Mammary epithelial cell (primary cell): ENCODE measurements at regions of chr3 and their contacts with region 1.

Region 1: DNA sequence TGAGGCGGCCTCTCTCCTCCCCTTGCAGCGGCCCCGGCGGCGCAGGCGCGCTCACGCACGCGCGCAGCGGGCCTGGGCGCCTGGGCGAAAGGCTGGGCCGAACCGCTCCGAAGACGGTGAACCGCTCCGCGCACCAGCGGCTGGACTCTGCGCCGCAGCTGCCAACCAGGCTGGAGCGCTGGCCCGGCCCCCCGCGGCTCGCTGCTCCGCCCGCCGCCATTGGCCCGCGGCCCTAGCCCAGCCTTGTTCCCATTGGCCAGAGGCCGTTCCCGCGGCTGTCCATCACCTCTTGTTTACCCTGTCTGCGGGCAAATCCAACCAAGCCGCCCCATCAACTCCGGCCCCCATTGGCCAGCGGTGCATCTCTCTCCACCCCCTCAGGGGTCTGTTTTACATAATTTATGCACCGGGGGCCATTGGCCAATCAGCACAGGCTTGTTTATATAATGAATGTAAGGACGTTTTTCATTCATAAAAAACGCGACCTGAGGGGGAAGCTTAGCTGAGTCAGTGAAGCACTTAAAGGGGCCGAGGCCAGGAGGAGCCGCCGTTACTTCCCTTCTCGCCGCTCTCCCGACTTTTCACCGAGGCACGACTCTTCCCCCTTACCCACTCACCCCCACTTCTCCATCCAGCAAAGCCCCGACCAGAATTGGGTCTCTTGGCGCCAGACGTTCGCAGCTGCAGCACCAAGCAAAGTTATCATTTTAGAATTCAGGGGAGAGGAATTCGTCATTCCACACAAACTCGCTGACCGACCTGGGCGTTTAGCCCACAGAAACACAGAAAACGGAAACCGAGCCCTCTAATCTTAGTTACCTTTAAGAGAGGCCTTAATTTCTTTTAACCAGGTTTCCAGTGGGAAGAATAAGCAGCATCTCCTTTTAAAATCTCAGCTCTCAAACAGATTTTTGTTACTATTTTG is at the start of gene ETV5:
- DNase-seq: peak; percentile 100
- H3K4me3 ChIP-seq: peak within 1 kb of the TSS; percentile 71 to 92 (median 91)
- H3K27ac ChIP-seq: peak within 1 kb of the TSS; percentile 66
- H3K4me1 ChIP-seq: peaks cover 30% of the 10 kb centered on the region
- H3K27me3 ChIP-seq: no peaks in the 10 kb centered on the region
- CTCF ChIP-seq: no peak
- total RNA-seq, gene ETV5: 69.3 to 80.3 TPM

Region 2: GRCh38 chr3:185637388-185637787 is 471.8 kb before region 1 on chr3:
- CTCF ChIA-PET with region 1: no interaction called
- dilution Hi-C with region 1: no loop called
- in situ Hi-C with region 1: no loop called
- intact Hi-C with region 1: no loop called
- DNase-seq: no peak
- H3K4me3 ChIP-seq: no peak overlapping the region
- H3K27ac ChIP-seq: no peak overlapping the region
- H3K4me1 ChIP-seq: no peaks in the 10 kb centered on the region
- H3K27me3 ChIP-seq: no peaks in the 10 kb centered on the region
- CTCF ChIP-seq: no peak

Region 3: GRCh38 chr3:185659942-185660921 is 449.0 kb before region 1 on chr3:
- CTCF ChIA-PET with region 1: no interaction called
- dilution Hi-C with region 1: no loop called
- in situ Hi-C with region 1: no loop called
- intact Hi-C with region 1: loop called (anchors 5 kb)
- DNase-seq: peak; percentile 62
- H3K4me3 ChIP-seq: no peak overlapping the region
- H3K27ac ChIP-seq: peak overlapping the region; percentile 48
- H3K4me1 ChIP-seq: peaks cover 60% of the 10 kb centered on the region
- H3K27me3 ChIP-seq: no peaks in the 10 kb centered on the region
- CTCF ChIP-seq: peak; percentile 98 to 99

Region 4: GRCh38 chr3:186073641-186074040 is 35.6 kb before region 1 on chr3:
- CTCF ChIA-PET with region 1: no interaction called
- dilution Hi-C with region 1: no loop called
- in situ Hi-C with region 1: no loop called
- intact Hi-C with region 1: loop called (anchors 2 kb)
- DNase-seq: no peak
- H3K4me3 ChIP-seq: no peak overlapping the region
- H3K27ac ChIP-seq: no peak overlapping the region
- H3K4me1 ChIP-seq: peaks cover 11% of the 10 kb centered on the region
- H3K27me3 ChIP-seq: no peaks in the 10 kb centered on the region
- CTCF ChIP-seq: no peak

Region 5: GRCh38 chr3:186241910-186242821 is 133.0 kb after region 1 on chr3:
- CTCF ChIA-PET with region 1: interaction called, 11 read pairs
- dilution Hi-C with region 1: no loop called
- in situ Hi-C with region 1: no loop called
- intact Hi-C with region 1: loop called (anchors 1 kb)
- DNase-seq: peak; percentile 83
- H3K4me3 ChIP-seq: peak overlapping the region; percentile 14 to 35 (median 28)
- H3K27ac ChIP-seq: peak overlapping the region; percentile 5
- H3K4me1 ChIP-seq: peaks cover 8% of the 10 kb centered on the region
- H3K27me3 ChIP-seq: no peaks in the 10 kb centered on the region
- CTCF ChIP-seq: peak; percentile 56 to 75

Region 6: DNA sequence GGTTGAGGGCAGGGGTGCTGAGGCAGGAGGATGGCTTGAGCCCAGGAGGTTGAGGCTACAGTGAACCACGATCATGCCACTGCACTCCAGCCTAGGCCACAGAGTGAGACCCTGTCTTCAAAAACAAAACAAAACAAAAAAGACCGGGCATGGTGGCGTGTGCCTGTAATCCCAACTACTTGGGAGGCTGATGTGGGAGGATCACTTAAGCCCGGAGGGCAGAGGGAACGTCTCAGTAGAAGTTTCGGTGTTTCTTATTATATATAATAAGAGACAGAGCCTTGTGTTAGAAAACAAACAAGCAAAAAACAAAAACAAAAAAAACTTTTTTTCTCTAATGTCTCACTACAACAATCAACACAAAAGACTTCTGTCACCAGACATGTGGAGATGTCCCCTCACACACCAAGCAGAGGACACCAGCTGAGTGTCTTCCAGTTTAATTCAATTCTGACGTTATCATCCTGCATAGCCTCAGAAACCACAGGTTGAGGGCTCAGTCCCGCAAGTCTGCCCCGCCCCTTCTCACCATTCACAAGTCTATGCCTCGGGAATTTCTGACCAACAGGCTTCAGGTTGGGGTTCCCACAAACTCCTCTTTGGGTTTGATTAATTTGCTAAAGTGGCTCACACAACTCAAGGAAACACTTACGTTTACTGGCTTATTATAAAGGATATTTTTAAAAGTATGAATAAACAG is 650.2 kb after region 1 on chr3:
- CTCF ChIA-PET with region 1: no interaction called
- dilution Hi-C with region 1: no loop called
- in situ Hi-C with region 1: no loop called
- intact Hi-C with region 1: loop called (anchors 10 kb)
- DNase-seq: no peak
- H3K4me3 ChIP-seq: no peak overlapping the region
- H3K27ac ChIP-seq: no peak overlapping the region
- H3K4me1 ChIP-seq: peaks cover 4% of the 10 kb centered on the region
- H3K27me3 ChIP-seq: no peaks in the 10 kb centered on the region
- CTCF ChIP-seq: no peak